ENCODE measurements at regions of chr9 and their contacts with region 1.

Region 1: GRCh38 chr9:98775831-98776441 is 20.4 kb downstream of the ANKS6 start:
- DNase-seq: peak; percentile 52
- H3K4me3 ChIP-seq: no peak overlapping the region
- H3K27ac ChIP-seq: no peak overlapping the region
- H3K27me3 ChIP-seq: no peaks in the 10 kb centered on the region
- CTCF ChIP-seq: peak; percentile 89

Region 2: DNA sequence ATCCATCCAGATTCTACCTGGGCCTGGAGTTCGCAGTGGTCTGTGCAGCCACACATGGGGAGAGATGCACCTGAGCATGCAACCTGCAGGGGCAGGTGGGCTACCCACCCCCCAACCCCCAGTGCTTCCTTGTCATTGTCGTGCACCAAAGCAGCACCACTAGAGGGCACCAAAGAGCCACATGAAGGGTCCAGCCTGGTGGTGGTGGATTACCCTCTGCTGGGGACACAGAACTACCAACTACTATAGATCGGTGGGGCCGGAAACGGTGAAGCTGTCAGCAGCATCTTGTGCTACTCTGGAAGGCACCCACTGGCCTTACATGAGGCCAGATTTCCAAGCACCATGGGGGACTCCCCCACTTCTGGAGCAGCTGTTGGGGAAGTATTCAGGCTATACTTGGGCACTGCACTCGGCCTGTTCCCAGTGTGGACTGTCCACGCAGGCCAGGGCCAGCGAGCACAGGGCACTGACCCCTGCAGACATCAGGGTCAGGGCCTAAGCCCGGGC is 460.3 kb before region 1 on chr9:
- CTCF ChIA-PET with region 1: interaction called, 197 read pairs
- POLR2A ChIA-PET with region 1: interaction called, 4 read pairs
- DNase-seq: peak; percentile 67
- H3K4me3 ChIP-seq: no peak overlapping the region
- H3K27ac ChIP-seq: no peak overlapping the region
- H3K27me3 ChIP-seq: no peaks in the 10 kb centered on the region
- CTCF ChIP-seq: peak; percentile 94

Region 3: DNA sequence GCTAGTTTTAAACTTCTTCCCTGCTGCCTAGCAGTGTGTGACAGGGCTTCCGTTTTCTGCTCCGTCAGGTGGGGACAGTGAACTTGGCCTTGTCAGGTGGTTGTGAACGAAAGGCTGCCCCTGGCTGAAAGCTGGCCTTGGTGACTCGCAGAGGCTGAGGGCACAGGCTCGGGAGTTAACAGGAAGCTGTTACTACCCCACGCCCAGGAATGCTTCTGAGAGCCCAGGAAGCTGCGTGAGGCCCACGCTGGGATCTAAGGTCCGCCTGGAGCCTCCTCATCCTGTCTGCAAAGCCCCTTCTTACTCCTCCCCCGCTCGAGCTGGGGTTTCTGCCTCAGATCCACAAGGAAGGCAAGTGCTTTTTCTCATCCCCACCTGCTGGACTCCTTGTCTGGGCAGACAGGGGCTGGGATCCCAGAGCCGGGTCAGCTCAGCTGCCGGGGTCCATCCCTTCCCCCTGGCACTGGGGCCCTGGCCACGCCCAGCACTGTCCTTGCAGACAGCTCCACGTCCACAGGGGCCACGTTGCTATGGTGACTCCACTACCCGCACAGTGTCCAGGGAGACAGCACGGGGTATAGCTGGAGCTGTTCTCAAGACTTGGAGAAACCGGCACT is 395.8 kb before region 1 on chr9:
- CTCF ChIA-PET with region 1: interaction called, 17 read pairs
- POLR2A ChIA-PET with region 1: no interaction called
- DNase-seq: no peak
- H3K4me3 ChIP-seq: no peak overlapping the region
- H3K27ac ChIP-seq: peak overlapping the region; percentile 42
- H3K27me3 ChIP-seq: no peaks in the 10 kb centered on the region
- CTCF ChIP-seq: no peak

Region 4: GRCh38 chr9:98707166-98708102 is 68.5 kb before region 1 on chr9:
- CTCF ChIA-PET with region 1: interaction called, 11 read pairs
- POLR2A ChIA-PET with region 1: no interaction called
- DNase-seq: peak; percentile 46
- H3K4me3 ChIP-seq: peak overlapping the region; percentile 56
- H3K27ac ChIP-seq: no peak overlapping the region
- H3K27me3 ChIP-seq: peaks cover 50% of the 10 kb centered on the region
- CTCF ChIP-seq: peak; percentile 79

Region 5: GRCh38 chr9:98760231-98760630 is 15.7 kb before region 1 on chr9:
- CTCF ChIA-PET with region 1: interaction called, 65 read pairs
- POLR2A ChIA-PET with region 1: no interaction called
- DNase-seq: no peak
- H3K4me3 ChIP-seq: no peak overlapping the region
- H3K27ac ChIP-seq: no peak overlapping the region
- H3K27me3 ChIP-seq: no peaks in the 10 kb centered on the region
- CTCF ChIP-seq: no peak

Region 6: GRCh38 chr9:98819231-98819630 is 43.3 kb after region 1 on chr9:
- CTCF ChIA-PET with region 1: no interaction called
- POLR2A ChIA-PET with region 1: no interaction called
- DNase-seq: no peak
- H3K4me3 ChIP-seq: no peak overlapping the region
- H3K27ac ChIP-seq: no peak overlapping the region
- H3K27me3 ChIP-seq: peaks cover 4% of the 10 kb centered on the region
- CTCF ChIP-seq: no peak